ENCODE measurements at regions of chr6 and their contacts with region 1.

Region 1: GRCh38 chr6:4848382-4849068 is 72.3 kb downstream of the CDYL start:
- DNase-seq: peak; percentile 56
- H3K4me3 ChIP-seq: no peak overlapping the region
- H3K27ac ChIP-seq: no peak overlapping the region
- H3K4me1 ChIP-seq: peaks cover 12% of the 10 kb centered on the region
- H3K27me3 ChIP-seq: no peaks in the 10 kb centered on the region
- CTCF ChIP-seq: peak; percentile 23 to 34
- POLR2A ChIP-seq: no peak

Region 2: GRCh38 chr6:4460586-4461475 is 387.7 kb before region 1 on chr6:
- CTCF ChIA-PET with region 1: no interaction called
- POLR2A ChIA-PET with region 1: no interaction called
- dilution Hi-C with region 1: no loop called
- intact Hi-C with region 1: no loop called
- DNase-seq: no peak
- H3K4me3 ChIP-seq: no peak overlapping the region
- H3K27ac ChIP-seq: no peak overlapping the region
- H3K4me1 ChIP-seq: peaks cover 12% of the 10 kb centered on the region
- H3K27me3 ChIP-seq: no peaks in the 10 kb centered on the region
- CTCF ChIP-seq: no peak
- POLR2A ChIP-seq: no peak

Region 3: DNA sequence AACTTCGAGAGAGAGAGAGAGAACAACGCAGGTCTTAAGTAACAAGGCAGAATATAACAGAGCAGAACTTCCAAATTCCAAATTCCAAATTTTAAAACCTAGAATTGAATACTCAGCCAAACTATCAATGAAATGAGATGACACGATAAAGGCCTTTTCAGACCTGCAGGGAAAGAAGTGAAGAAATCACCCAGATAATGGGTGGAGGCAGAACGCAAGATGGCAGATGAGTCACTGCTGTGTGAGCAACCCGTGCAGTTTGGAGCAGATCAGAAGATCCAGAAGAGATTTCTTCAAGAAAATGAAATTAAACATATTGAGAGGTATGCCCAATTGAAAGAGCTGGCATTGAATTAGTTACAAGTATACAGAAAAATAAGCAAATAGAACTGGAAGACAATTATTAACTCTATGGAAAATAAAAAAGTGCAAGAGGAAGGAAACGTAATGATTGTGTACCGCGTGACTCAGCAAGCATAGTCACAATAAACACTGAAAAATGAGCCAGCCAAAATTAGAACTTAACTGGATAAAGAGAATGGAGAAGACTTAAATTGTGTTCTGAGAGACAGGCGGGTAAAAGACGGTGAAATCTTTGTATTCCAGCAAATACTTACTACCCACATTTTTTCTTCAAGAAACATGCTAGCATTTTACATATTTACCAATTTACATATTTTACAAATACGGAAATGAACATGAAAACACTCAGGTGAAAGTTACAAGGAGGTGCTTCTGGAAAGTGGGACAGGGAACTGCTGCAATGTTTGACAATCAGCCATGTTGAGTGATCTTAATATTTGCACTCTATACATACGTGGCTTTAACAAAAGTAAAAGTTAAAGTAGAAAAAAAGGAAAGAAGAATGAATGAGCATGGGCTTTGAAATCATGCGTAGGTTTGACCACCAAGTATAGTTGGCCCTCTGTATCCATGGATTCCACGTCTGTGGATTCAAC is 160.3 kb before region 1 on chr6:
- CTCF ChIA-PET with region 1: no interaction called
- POLR2A ChIA-PET with region 1: no interaction called
- dilution Hi-C with region 1: no loop called
- intact Hi-C with region 1: loop called (anchors 2 kb)
- DNase-seq: peak; percentile 87
- H3K4me3 ChIP-seq: peak overlapping the region in 1 of 3 experiments; percentile 54
- H3K27ac ChIP-seq: peak overlapping the region; percentile 80
- H3K4me1 ChIP-seq: peaks cover 11% of the 10 kb centered on the region
- H3K27me3 ChIP-seq: peaks cover 4% of the 10 kb centered on the region in 2 experiments
- CTCF ChIP-seq: no peak
- POLR2A ChIP-seq: no peak

Region 4: GRCh38 chr6:4812068-4812467 is 36.5 kb before region 1 on chr6:
- CTCF ChIA-PET with region 1: interaction called, 3 read pairs
- POLR2A ChIA-PET with region 1: no interaction called
- dilution Hi-C with region 1: no loop called
- intact Hi-C with region 1: loop called (anchors 2 kb)
- DNase-seq: peak; percentile 92
- H3K4me3 ChIP-seq: no peak overlapping the region
- H3K27ac ChIP-seq: peak overlapping the region; percentile 95
- H3K4me1 ChIP-seq: peaks cover 33% of the 10 kb centered on the region
- H3K27me3 ChIP-seq: no peaks in the 10 kb centered on the region
- CTCF ChIP-seq: no peak
- POLR2A ChIP-seq: peak; percentile 46

Region 5: DNA sequence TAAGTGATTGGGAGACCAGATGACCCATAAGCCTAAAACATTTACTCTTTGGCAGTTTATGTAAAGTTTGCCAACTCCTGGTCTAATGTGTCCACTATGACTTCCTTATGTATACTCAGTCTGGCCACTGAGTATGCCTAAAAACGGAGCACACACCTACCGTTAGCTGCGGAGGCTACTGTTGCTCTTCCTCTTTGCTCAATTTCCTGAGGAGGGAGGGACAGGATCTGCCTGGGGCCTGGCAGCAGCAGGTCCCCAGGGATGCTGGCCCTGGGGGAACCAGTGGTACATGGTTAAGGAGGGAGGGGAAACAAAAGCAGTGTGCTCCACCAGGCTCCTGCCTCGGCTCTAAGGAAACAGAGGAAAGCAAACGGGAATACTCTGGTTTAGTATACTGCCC is 41.2 kb after region 1 on chr6:
- CTCF ChIA-PET with region 1: no interaction called
- POLR2A ChIA-PET with region 1: no interaction called
- dilution Hi-C with region 1: no loop called
- intact Hi-C with region 1: no loop called
- DNase-seq: no peak
- H3K4me3 ChIP-seq: no peak overlapping the region
- H3K27ac ChIP-seq: no peak overlapping the region
- H3K4me1 ChIP-seq: no peaks in the 10 kb centered on the region
- H3K27me3 ChIP-seq: no peaks in the 10 kb centered on the region
- CTCF ChIP-seq: no peak
- POLR2A ChIP-seq: no peak

Region 6: GRCh38 chr6:5125152-5126006 is 276.9 kb after region 1 on chr6:
- CTCF ChIA-PET with region 1: no interaction called
- POLR2A ChIA-PET with region 1: no interaction called
- dilution Hi-C with region 1: no loop called
- intact Hi-C with region 1: no loop called
- DNase-seq: no peak
- H3K4me3 ChIP-seq: no peak overlapping the region
- H3K27ac ChIP-seq: no peak overlapping the region
- H3K4me1 ChIP-seq: no peaks in the 10 kb centered on the region
- H3K27me3 ChIP-seq: no peaks in the 10 kb centered on the region
- CTCF ChIP-seq: no peak
- POLR2A ChIP-seq: no peak

Measured in endothelial cell of umbilical vein (primary cell).